ENCODE measurements at regions of chr3 and their contacts with region 1.

Region 1: DNA sequence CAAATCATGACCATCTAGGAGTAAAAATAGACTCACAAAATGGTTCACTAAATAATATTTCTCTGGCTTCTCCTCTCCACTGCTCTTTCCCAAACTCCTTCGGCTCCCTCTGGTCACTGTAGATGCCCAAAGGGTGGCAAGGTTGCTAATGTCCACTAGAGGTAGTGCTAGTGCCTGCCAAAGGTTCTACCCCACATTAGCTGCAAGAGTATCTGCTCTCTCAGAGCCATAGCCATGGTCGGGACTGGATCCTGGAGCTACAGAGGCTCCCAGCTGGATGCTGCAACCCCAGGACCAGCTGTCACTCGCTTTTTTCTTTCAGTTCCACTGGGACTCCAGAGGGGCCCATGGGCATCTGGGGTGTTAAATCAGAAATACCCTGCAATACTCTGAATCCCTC is 8.5 kb downstream of the HTR3D start:
- DNase-seq: peak; percentile 65
- H3K4me3 Mint-ChIP-seq: no peak overlapping the region
- H3K27ac Mint-ChIP-seq: no peak overlapping the region
- H3K4me1 Mint-ChIP-seq: no peaks in the 10 kb centered on the region
- H3K27me3 Mint-ChIP-seq: peaks cover 44% of the 10 kb centered on the region
- CTCF ChIP-seq: peak; percentile 76

Region 2: GRCh38 chr3:183766745-183767606 is 273.0 kb before region 1 on chr3:
- CTCF ChIA-PET with region 1: no interaction called
- intact Hi-C with region 1: no loop called
- DNase-seq: peak; percentile 89
- H3K4me3 Mint-ChIP-seq: no peak overlapping the region
- H3K27ac Mint-ChIP-seq: no peak overlapping the region
- H3K4me1 Mint-ChIP-seq: peaks cover 24% of the 10 kb centered on the region
- H3K27me3 Mint-ChIP-seq: no peaks in the 10 kb centered on the region
- CTCF ChIP-seq: peak; percentile 96

Region 3: GRCh38 chr3:184117636-184118035 is 77.6 kb after region 1 on chr3:
- CTCF ChIA-PET with region 1: no interaction called
- intact Hi-C with region 1: loop called (anchors 2 kb)
- DNase-seq: no peak
- H3K4me3 Mint-ChIP-seq: no peak overlapping the region
- H3K27ac Mint-ChIP-seq: no peak overlapping the region
- H3K4me1 Mint-ChIP-seq: no peaks in the 10 kb centered on the region
- H3K27me3 Mint-ChIP-seq: peaks cover 25% of the 10 kb centered on the region
- CTCF ChIP-seq: no peak

Region 4: DNA sequence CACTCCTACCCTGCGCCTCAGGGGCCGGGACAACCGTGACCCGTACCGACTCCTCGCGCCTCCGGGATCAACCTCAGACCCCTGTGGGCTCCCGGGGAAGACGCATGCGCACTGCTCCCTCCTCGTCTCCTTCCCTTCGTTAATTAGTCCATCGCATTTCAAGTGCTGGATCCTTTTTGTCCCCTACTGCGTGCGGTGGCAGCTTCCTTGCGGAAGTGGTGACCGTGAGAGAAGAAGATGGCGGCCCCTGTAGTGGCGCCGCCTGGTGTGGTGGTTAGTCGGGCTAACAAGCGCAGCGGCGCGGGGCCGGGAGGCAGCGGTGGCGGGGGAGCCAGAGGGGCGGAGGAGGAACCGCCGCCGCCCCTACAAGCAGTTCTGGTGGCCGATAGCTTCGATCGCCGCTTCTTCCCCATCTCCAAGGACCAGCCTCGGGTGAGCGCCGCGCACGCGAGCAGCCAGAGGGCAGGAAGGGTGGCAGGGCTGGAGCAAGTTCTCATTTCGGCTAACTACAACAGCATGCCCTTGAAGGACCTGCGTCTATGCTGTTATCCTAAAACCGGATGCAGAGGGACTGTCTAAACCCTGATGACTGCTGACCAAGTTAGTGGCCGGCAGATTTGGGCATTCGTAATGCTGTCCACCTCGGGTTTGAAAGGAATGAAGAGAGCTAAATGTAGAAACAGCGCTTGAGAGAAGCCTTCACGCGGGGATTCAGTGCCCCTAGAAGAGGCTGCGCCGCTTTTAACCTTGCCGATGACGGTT is 95.3 kb after region 1 on chr3 and contains the start of gene EIF2B5:
- CTCF ChIA-PET with region 1: interaction called, 8 read pairs
- intact Hi-C with region 1: loop called (anchors 5 kb)
- DNase-seq: peak; percentile 95
- H3K4me3 Mint-ChIP-seq: peak within 1 kb of the TSS; percentile 99
- H3K27ac Mint-ChIP-seq: peak within 1 kb of the TSS; percentile 94
- H3K4me1 Mint-ChIP-seq: peaks cover 36% of the 10 kb centered on the region
- H3K27me3 Mint-ChIP-seq: no peaks in the 10 kb centered on the region
- CTCF ChIP-seq: peak; percentile 11
- total RNA-seq, gene EIF2B5: 79.6 and 87.9 TPM in 2 replicates

Region 5: GRCh38 chr3:184241447-184242296 is 201.7 kb after region 1 on chr3:
- CTCF ChIA-PET with region 1: no interaction called
- intact Hi-C with region 1: loop called (anchors 5 kb)
- DNase-seq: peak; percentile 94
- H3K4me3 Mint-ChIP-seq: peak overlapping the region; percentile 56
- H3K27ac Mint-ChIP-seq: no peak overlapping the region
- H3K4me1 Mint-ChIP-seq: no peaks in the 10 kb centered on the region
- H3K27me3 Mint-ChIP-seq: peaks cover 39% of the 10 kb centered on the region
- CTCF ChIP-seq: peak; percentile 94

Region 6: GRCh38 chr3:184289426-184289938 is 249.5 kb after region 1 on chr3:
- CTCF ChIA-PET with region 1: interaction called, 3 read pairs
- intact Hi-C with region 1: loop called (anchors 5 kb)
- DNase-seq: peak; percentile 90
- H3K4me3 Mint-ChIP-seq: no peak overlapping the region
- H3K27ac Mint-ChIP-seq: no peak overlapping the region
- H3K4me1 Mint-ChIP-seq: no peaks in the 10 kb centered on the region
- H3K27me3 Mint-ChIP-seq: peaks cover 72% of the 10 kb centered on the region
- CTCF ChIP-seq: peak; percentile 97

Measured in Calu3 (cell line).